Activated CD4-positive, alpha-beta memory T cell treated with anti-CD3 and anti-CD28 coated beads, Interleukin-2, amount 10 ng/mL, durations not matched to agents 7 days and 5 days (primary cell): ENCODE measurements at regions of chr1 and their contacts with region 1.

Region 1: GRCh38 chr1:92317836-92318493 is 19.1 kb downstream of the RPAP2 start:
- DNase-seq: peak; percentile 36
- H3K4me3 Mint-ChIP-seq: peak overlapping the region; percentile 25
- H3K27ac Mint-ChIP-seq: peak overlapping the region; percentile 85
- H3K4me1 Mint-ChIP-seq: peaks cover 67% of the 10 kb centered on the region
- H3K27me3 Mint-ChIP-seq: no peaks in the 10 kb centered on the region

Region 2: GRCh38 chr1:92298573-92299476 is 19.1 kb before region 1 on chr1 and contains the starts of genes GLMN and RPAP2:
- CTCF ChIA-PET with region 1: interaction called, 6 read pairs
- POLR2A ChIA-PET with region 1: interaction called, 16 read pairs
- DNase-seq: peak; percentile 77
- H3K4me3 Mint-ChIP-seq: peak within 1 kb of the TSS; percentile 83
- H3K27ac Mint-ChIP-seq: peak within 1 kb of the TSS; percentile 81
- H3K4me1 Mint-ChIP-seq: peaks cover 49% of the 10 kb centered on the region
- H3K27me3 Mint-ChIP-seq: no peaks in the 10 kb centered on the region
- total RNA-seq, gene GLMN: 18.2 to 18.7 TPM
- total RNA-seq, gene RPAP2: 31.6 to 36.5 TPM

Region 3: DNA sequence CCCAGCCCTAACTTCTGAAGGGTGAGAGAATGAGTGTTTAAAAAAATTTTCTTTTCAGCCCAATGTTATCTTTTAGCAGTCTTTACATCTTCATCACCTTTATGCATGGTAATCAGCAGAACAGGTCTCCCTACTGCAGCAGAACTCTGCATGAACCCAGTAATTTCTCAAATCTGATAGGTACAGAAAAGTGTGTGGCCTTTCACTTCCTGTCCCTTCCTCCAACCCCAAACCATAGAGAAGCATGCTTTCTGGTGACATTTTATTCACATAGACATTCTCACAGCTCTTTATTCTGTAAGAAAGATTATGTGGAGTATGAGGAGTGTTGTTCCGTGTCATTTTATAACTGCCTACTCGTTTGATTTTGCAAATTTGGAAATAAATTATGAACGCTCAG is 49.5 kb after region 1 on chr1:
- CTCF ChIA-PET with region 1: interaction called, 3 read pairs
- POLR2A ChIA-PET with region 1: interaction called, 43 read pairs
- DNase-seq: no peak
- H3K4me3 Mint-ChIP-seq: no peak overlapping the region
- H3K27ac Mint-ChIP-seq: peak overlapping the region; percentile 62
- H3K4me1 Mint-ChIP-seq: peaks cover 51% of the 10 kb centered on the region
- H3K27me3 Mint-ChIP-seq: no peaks in the 10 kb centered on the region